Calu3 (cell line): ENCODE measurements at regions of chr2 and their contacts with region 1.

Region 1: DNA sequence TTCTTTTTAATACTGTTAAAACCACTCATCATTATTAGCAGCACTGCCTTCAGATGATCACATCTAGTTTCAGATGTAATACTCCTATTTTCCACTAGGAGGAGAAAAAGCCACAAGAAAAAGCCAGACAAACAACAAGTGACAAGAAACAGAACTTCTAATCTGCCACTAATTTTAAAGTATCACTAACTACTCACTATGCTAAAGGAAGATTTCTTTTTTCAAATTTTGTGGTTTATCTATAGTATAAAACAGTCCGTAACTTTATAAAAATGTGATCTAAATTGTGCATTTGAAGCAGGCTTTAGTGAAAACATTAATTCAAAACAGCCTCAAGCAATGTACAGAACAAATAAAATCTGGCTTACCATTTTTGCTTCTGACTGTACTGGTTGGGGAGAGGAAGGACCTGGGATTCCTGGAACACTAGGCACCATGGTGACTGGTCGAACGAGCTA is 56.8 kb downstream of the ATF2 start:
- DNase-seq: no peak
- H3K4me3 Mint-ChIP-seq: no peak overlapping the region
- H3K27ac Mint-ChIP-seq: no peak overlapping the region
- H3K4me1 Mint-ChIP-seq: no peaks in the 10 kb centered on the region
- H3K27me3 Mint-ChIP-seq: no peaks in the 10 kb centered on the region
- CTCF ChIP-seq: peak; percentile 77

Region 2: GRCh38 chr2:175057078-175057685 is 54.0 kb before region 1 on chr2:
- CTCF ChIA-PET with region 1: no interaction called
- intact Hi-C with region 1: no loop called
- DNase-seq: no peak
- H3K4me3 Mint-ChIP-seq: no peak overlapping the region
- H3K27ac Mint-ChIP-seq: no peak overlapping the region
- H3K4me1 Mint-ChIP-seq: no peaks in the 10 kb centered on the region
- H3K27me3 Mint-ChIP-seq: no peaks in the 10 kb centered on the region
- CTCF ChIP-seq: no peak

Region 3: GRCh38 chr2:175152242-175152641 is 41.0 kb after region 1 on chr2:
- CTCF ChIA-PET with region 1: no interaction called
- intact Hi-C with region 1: loop called (anchors 2 kb)
- DNase-seq: no peak
- H3K4me3 Mint-ChIP-seq: no peak overlapping the region
- H3K27ac Mint-ChIP-seq: no peak overlapping the region
- H3K4me1 Mint-ChIP-seq: peaks cover 42% of the 10 kb centered on the region
- H3K27me3 Mint-ChIP-seq: no peaks in the 10 kb centered on the region
- CTCF ChIP-seq: no peak

Region 4: GRCh38 chr2:175167792-175168563 is 56.7 kb after region 1 on chr2 and contains the start of gene ATF2:
- CTCF ChIA-PET with region 1: interaction called, 3 read pairs
- intact Hi-C with region 1: loop called (anchors 5 kb)
- DNase-seq: peak; percentile 97
- H3K4me3 Mint-ChIP-seq: peak within 1 kb of the TSS; percentile 94
- H3K27ac Mint-ChIP-seq: peak within 1 kb of the TSS; percentile 93
- H3K4me1 Mint-ChIP-seq: no peaks in the 10 kb centered on the region
- H3K27me3 Mint-ChIP-seq: no peaks in the 10 kb centered on the region
- CTCF ChIP-seq: no peak
- total RNA-seq, gene ATF2: 46.1 and 53.9 TPM in 2 replicates

Region 5: DNA sequence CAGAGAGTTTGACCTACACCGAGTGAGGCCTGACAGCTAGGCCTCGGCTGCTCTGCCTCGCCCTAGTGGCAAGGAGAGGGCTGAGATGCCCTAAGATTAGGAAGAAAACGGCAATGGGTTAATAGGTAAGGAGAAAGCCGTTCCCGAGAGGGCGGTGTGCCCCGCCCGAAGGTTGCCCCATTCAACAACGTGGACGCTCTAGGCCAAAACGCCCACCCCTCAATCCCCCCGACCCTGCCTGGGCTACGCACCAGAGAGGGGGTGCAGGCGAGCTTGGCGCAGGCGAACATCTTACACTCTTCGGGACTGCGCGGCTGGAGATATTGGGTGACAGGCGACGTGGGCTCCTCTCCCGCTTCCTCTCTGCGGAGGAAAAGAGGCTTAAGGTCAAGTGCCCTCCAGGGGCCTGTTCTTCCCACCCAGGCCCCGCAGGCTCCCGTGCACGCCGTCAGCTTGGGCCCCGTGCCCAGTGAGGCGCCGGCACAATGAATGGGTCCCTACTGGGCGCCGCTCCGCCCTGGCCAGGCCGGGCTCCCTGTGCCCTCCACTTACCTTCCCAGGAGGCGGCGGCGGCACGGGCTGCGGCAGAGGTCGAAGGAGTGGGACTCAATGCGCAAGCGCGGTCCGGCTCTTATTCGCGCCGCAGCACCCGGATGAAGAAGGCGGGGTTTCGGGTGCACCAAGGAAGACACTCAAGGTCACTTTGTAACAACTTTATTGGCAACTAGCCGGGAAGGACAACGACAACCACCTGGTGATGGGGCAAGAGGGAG is 70.1 kb after region 1 on chr2 and contains the start of gene ATP5MC3:
- CTCF ChIA-PET with region 1: no interaction called
- intact Hi-C with region 1: loop called (anchors 2 kb)
- DNase-seq: peak; percentile 92
- H3K4me3 Mint-ChIP-seq: peak within 1 kb of the TSS; percentile 86
- H3K27ac Mint-ChIP-seq: peak within 1 kb of the TSS; percentile 83
- H3K4me1 Mint-ChIP-seq: peaks cover 10% of the 10 kb centered on the region
- H3K27me3 Mint-ChIP-seq: no peaks in the 10 kb centered on the region
- CTCF ChIP-seq: no peak
- total RNA-seq, gene ATP5MC3: 209 and 225 TPM in 2 replicates

Region 6: DNA sequence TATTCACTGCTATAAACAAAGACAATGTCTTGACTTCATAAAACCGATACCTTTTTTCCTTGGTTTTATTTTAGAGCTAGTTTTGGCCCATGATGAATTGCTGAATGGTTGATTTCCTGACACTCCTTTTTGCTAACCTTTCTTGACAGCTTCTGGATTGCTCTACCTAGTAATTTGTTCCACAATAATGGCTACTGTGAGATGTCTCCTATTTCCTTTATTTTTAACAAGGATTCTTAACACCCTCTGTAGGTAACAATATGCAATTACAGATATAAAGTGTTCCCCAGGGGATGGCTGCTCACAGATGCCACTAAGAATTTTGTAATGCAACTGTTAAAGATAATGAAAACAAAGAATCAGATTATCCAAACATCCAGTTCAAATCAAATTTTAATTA is 171.1 kb after region 1 on chr2:
- CTCF ChIA-PET with region 1: no interaction called
- intact Hi-C with region 1: loop called (anchors 1 kb)
- DNase-seq: no peak
- H3K4me3 Mint-ChIP-seq: no peak overlapping the region
- H3K27ac Mint-ChIP-seq: no peak overlapping the region
- H3K4me1 Mint-ChIP-seq: no peaks in the 10 kb centered on the region
- H3K27me3 Mint-ChIP-seq: peaks cover 25% of the 10 kb centered on the region
- CTCF ChIP-seq: peak; percentile 41